Cardiac septum (tissue), 1 donor: ENCODE measurements at regions of chr12 and their contacts with region 1.

Region 1: GRCh38 chr12:43338848-43339526 is 213.0 kb downstream of the ADAMTS20 start:
- DNase-seq: no peak

Region 2: DNA sequence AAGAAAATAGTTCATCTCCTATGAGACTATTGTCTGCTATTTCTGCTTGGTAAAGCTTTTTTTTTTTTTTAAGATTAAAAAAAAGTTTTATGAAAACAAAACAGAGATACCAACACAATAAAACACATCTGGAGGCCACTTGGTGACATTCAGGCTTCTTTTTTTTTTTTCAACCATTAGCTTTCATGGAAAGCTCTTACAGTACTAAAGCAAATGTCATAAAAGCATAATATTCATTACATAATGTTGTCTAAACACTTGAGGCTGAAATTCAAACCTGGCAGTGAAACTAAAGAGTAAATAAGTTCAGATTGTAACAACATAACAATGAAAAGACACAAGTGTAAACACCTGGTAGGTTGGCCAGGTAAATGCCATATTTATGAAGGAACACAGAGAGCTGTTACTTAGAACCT is 764.1 kb before region 1 on chr12:
- intact Hi-C with region 1: loop called (anchors 5 kb)
- DNase-seq: no peak

Region 3: DNA sequence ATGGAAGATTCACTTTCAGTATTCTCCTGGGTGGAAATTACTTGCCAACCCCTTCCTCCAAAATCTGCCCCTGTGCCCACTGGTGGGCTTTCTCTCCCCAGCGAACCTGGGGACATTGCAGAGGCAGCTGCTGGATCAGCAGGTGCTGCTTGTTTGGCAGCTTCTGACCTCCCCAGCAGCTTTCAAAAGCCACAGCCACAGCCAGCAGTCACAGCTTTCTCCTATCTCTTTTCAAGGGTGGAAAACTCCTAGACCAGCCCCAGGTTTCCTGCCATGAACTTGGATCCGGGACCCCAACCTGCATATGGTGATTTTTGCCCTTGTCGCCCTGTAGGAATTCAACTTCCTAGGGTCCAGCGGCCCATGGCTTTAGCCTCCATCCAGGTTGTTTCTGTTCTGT is 117.8 kb before region 1 on chr12:
- intact Hi-C with region 1: no loop called
- DNase-seq: no peak

Region 4: DNA sequence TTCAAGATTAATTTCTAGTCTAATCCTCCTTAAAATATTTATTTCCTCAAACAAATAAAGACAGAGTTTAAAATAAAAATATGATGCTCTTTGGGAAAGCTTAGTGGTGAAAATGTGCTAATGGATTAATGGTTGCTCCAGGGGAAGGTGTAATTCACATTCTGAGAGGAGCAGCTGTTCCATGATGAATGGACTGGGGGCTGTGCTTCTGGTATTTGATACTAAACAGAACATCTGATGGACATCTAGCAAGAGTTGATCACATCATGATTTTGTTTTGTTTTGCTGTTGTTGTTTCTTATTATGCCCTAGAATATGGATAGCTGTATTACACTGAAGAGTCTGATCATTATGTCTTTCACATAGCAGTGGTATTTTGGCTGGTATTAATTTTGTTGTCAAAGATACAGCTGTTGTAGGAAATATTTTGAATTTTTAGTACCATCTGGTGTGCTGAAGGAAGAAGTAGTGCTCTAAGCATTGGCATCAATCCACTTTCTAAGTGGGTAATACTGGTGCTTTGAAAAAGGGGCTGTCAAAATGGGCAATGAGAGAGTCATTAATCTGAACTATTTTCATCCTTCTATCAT is 83.4 kb before region 1 on chr12:
- intact Hi-C with region 1: no loop called
- DNase-seq: no peak

Region 5: GRCh38 chr12:43273467-43273866 is 65.5 kb before region 1 on chr12:
- intact Hi-C with region 1: no loop called
- DNase-seq: no peak

Region 6: GRCh38 chr12:43306066-43306465 is 32.9 kb before region 1 on chr12:
- intact Hi-C with region 1: no loop called
- DNase-seq: no peak